ENCODE measurements at regions of chr1 and their contacts with region 1.

Region 1: DNA sequence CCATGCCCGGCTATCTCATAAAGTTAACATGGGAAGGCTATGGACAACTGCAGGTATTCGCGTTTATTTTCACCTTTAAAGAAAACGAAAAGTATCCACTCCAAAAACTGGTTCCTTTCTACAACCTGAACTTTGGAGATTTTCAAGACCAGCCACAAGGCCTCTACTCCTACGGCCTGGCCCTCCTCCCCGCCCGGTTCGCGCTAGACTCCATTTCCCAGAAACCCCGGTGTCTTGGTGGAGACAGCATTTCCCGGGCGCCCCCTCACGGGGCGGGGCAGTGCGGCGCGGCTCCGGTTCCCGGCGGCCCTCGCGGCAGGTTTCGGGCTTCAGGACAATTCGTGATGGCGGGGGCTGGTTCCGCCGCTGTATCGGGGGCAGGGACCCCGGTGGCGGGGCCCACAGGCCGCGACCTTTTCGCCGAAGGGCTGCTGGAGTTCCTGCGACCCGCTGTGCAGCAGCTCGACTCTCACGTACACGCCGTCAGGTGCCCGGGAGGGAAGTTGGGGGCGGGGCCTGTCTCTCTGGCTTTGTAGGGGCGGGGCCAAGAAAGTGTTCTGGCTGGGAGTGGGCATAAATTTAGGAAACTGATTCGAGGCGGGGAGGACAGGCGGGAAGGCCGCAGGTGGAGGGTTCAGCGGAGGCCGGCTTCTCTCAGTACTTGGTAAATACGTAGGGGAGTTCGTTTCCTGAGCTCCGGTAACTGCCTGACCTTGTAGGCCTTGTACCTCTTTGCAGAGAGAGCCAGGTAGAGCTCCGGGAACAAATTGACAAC is at the start of gene SNAPIN:
- DNase-seq: peak; percentile 93
- ATAC-seq: peak; percentile 99
- H3K4me3 ChIP-seq: peak within 1 kb of the TSS; percentile 77 to 87 (median 82)
- H3K4me3 Mint-ChIP-seq: peak within 1 kb of the TSS; percentile 96
- H3K27ac ChIP-seq: peak within 1 kb of the TSS; percentile 68 to 83
- H3K27ac Mint-ChIP-seq: peak within 1 kb of the TSS; percentile 91
- H3K4me1 ChIP-seq: peaks cover 5 to 15% of the 10 kb centered on the region in 2 donors
- H3K4me1 Mint-ChIP-seq: peaks cover 12% of the 10 kb centered on the region
- H3K27me3 ChIP-seq: no peaks in the 10 kb centered on the region
- H3K27me3 Mint-ChIP-seq: no peaks in the 10 kb centered on the region
- CTCF ChIP-seq: no peak
- total RNA-seq, gene SNAPIN: 37.6 and 39.4 TPM in 2 replicates

Region 2: DNA sequence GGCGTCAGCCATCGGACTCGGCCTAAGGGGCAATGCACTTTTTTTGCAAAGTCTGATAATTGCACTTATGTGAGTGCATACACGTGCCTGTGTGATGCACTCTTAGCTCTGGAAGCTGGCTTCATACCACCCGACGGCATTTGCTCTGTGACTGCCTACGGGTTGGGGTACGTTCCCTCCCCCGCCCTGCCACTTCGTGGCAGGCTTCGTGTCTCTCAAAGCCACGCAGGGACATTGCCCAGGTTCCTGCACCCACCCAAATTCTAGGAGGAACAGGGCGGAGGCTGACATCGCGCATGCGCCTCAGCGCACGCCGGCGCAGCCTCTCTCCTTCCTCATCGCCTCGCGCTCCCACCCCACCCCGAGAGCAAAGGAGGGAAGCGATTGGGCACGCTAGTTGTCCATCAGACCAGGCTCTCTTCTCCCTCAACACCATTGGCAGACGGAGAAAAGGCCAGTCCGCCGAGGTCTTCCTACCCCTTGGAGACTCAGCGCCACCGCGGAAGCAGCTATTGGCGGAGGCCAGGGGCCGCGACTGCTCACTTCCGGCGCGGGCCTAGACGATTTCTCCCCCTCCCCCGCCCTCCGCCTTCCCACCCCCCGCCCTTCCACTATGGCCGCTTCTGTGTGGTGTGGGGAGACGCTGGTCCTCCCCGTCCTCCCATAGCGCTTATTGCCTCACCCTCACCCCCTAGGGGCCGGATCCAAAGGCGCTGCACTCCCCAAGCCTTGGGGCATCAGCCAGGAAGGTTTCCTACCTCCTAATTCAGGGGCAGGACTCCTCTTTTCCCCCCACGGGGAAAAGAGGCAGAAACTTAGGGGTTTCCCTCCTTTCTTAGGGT is 69.1 kb after region 1 on chr1 and contains the start of gene INTS3:
- CTCF ChIA-PET with region 1: no interaction called
- POLR2A ChIA-PET with region 1: interaction called, 5 read pairs
- intact Hi-C with region 1: loop called (anchors 1 kb)
- DNase-seq: peak; percentile 99
- ATAC-seq: peak; percentile 99
- H3K4me3 ChIP-seq: peak within 1 kb of the TSS; percentile 78 to 99 (median 91)
- H3K4me3 Mint-ChIP-seq: peak within 1 kb of the TSS; percentile 84
- H3K27ac ChIP-seq: peak within 1 kb of the TSS; percentile 97 to 98
- H3K27ac Mint-ChIP-seq: peak within 1 kb of the TSS; percentile 86
- H3K4me1 ChIP-seq: peaks cover 9 to 16% of the 10 kb centered on the region in 2 donors
- H3K4me1 Mint-ChIP-seq: peaks cover 36% of the 10 kb centered on the region
- H3K27me3 ChIP-seq: no peaks in the 10 kb centered on the region
- H3K27me3 Mint-ChIP-seq: no peaks in the 10 kb centered on the region
- CTCF ChIP-seq: no peak
- total RNA-seq, gene INTS3: 69.1 and 69.3 TPM in 2 replicates

Region 3: DNA sequence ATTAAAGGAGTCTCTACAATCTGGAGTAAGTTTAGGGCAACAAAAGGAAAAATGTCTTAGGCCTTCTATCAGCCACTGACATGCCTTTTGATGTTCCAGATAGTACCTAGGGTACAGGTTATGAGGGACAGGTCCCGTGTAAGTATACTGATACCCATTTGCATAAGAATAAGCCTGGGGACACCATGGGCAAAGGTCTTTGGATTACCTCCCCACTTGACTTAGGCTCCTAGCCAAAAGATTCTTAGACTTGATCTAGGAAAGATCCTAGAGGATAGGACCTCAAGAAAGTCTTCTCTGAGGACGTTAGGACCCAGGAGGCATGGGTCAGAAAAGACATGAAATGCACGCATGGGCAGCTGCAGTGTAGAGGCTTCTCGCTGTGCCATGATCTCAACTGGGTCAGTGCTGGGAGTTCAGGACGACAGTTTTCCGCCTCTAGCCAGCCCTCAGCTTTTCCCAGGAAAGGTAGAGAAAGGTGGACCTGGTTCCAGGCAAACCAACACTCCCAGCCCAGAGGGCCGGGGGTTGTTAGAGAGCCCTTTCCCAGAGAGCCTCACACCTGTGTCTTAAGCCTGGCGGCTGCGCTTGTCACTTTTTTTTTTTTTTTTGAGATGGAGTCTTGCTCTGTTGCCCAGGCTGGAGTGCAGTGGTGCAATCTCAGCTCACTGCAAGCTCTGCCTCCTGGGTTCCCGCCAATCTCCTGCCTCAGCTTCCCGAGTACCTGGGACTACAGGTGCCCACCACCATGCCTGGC is 1978.0 kb after region 1 on chr1:
- CTCF ChIA-PET with region 1: no interaction called
- POLR2A ChIA-PET with region 1: no interaction called
- intact Hi-C with region 1: no loop called
- DNase-seq: no peak
- ATAC-seq: no peak
- H3K4me3 ChIP-seq: peak overlapping the region in 3 of 5 experiments; percentile 35 to 60 (median 59)
- H3K4me3 Mint-ChIP-seq: peak overlapping the region; percentile 97
- H3K27ac ChIP-seq: no peak overlapping the region
- H3K27ac Mint-ChIP-seq: peak overlapping the region; percentile 93
- H3K4me1 ChIP-seq: peaks cover 14 to 17% of the 10 kb centered on the region in 2 donors
- H3K4me1 Mint-ChIP-seq: peaks cover 19% of the 10 kb centered on the region
- H3K27me3 ChIP-seq: no peaks in the 10 kb centered on the region
- H3K27me3 Mint-ChIP-seq: no peaks in the 10 kb centered on the region
- CTCF ChIP-seq: no peak

Measured in B cell (primary cell).